ENCODE measurements at regions of chr6 and their contacts with region 1.

Region 1: DNA sequence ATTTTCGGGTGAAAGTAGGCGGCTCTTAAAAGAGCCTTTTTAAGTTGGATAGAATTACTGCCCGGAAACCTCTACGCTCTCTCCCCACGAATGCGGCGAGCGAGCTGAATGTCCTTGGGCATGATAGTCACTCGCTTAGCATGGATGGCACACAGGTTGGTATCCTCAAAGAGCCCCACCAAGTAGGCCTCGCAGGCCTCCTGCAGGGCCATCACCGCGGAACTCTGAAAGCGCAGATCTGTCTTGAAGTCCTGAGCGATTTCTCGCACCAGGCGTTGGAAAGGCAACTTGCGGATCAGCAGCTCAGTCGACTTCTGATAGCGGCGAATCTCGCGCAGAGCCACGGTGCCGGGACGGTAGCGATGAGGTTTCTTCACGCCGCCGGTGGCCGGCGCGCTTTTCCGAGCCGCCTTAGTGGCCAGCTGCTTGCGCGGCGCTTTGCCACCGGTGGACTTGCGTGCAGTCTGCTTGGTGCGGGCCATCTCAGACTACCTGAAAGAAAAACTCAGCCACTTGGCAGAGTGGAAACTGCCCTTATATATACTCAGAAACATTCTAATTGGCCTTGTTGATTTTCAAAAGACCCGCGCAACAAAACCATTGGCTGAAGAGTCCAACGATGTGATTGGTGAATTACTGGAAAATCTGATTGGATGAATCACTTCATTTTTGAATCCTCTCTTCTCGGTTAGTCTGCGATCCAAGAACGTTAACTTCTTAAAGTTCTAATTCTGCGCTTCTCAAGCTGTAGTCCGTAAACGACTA is 93.9 kb upstream of the BTN3A2 start:
- DNase-seq: peak; percentile 86 to 88
- H3K4me3 ChIP-seq: peak overlapping the region; percentile 50
- H3K4me3 Mint-ChIP-seq: no peak overlapping the region
- H3K27ac Mint-ChIP-seq: no peak overlapping the region
- H3K4me1 ChIP-seq: peaks cover 19% of the 10 kb centered on the region
- H3K4me1 Mint-ChIP-seq: peaks cover 19% of the 10 kb centered on the region
- H3K27me3 ChIP-seq: no peaks in the 10 kb centered on the region
- H3K27me3 Mint-ChIP-seq: no peaks in the 10 kb centered on the region
- CTCF ChIP-seq: no peak

Region 2: DNA sequence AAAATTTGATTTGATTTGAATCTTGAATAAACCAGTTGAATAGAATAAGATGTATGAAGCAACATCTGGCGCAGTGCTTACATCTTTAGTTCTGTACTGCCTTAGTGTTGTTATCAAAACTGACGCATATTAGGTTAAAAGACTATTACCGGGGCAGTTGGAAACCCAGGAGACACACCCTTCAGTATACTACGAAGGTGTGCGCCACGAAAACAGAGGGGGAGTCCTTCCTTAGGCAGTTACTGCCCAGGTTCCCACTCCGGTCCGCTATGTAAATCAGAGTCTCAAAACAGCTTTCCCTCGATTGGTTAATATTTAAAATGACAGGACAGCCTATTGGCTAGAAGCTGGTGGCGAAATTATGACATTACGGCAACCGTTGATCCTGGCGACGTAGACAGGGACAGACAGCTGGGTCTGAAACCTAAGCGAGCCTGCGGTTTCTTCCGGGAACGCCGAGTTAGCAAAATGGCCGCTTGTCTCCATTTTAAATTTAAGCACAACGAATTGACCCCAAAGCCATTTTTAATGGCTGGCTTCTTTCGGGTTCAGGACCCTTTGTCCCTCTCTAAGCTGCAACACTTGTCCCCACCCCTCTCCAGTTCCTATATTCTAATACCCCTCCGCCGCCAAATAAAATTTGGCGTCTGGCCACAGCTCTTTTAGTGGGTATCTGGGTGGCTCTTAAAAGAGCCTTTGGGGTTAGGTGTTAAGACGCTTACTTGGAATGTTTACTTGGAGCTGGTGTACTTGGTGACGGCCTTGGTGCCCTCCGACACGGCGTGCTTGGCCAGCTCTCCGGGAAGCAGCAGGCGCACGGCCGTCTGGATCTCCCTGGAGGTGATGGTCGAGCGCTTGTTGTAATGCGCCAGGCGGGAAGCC is 148.1 kb before region 1 on chr6:
- CTCF ChIA-PET with region 1: no interaction called
- POLR2A ChIA-PET with region 1: interaction called, 28 read pairs
- intact Hi-C with region 1: loop called (anchors 10 kb)
- DNase-seq: peak; percentile 96 to 98
- H3K4me3 ChIP-seq: peak overlapping the region; percentile 44
- H3K4me3 Mint-ChIP-seq: peak overlapping the region; percentile 90
- H3K27ac Mint-ChIP-seq: peak overlapping the region; percentile 99
- H3K4me1 ChIP-seq: peaks cover 23% of the 10 kb centered on the region
- H3K4me1 Mint-ChIP-seq: peaks cover 36% of the 10 kb centered on the region
- H3K27me3 ChIP-seq: no peaks in the 10 kb centered on the region
- H3K27me3 Mint-ChIP-seq: no peaks in the 10 kb centered on the region
- CTCF ChIP-seq: no peak

Region 3: GRCh38 chr6:26172496-26172958 is 98.6 kb before region 1 on chr6:
- CTCF ChIA-PET with region 1: no interaction called
- POLR2A ChIA-PET with region 1: interaction called, 13 read pairs
- intact Hi-C with region 1: no loop called
- DNase-seq: no peak
- H3K4me3 ChIP-seq: peak overlapping the region; percentile 53
- H3K4me3 Mint-ChIP-seq: peak overlapping the region; percentile 68
- H3K27ac Mint-ChIP-seq: peak overlapping the region; percentile 37
- H3K4me1 ChIP-seq: peaks cover 6% of the 10 kb centered on the region
- H3K4me1 Mint-ChIP-seq: peaks cover 10% of the 10 kb centered on the region
- H3K27me3 ChIP-seq: no peaks in the 10 kb centered on the region
- H3K27me3 Mint-ChIP-seq: no peaks in the 10 kb centered on the region
- CTCF ChIP-seq: no peak

Region 4: GRCh38 chr6:26234421-26235296 is 36.4 kb before region 1 on chr6:
- CTCF ChIA-PET with region 1: interaction called, 3 read pairs
- POLR2A ChIA-PET with region 1: interaction called, 29 read pairs
- intact Hi-C with region 1: no loop called
- DNase-seq: peak; percentile 79 to 81
- H3K4me3 ChIP-seq: peak overlapping the region; percentile 52
- H3K4me3 Mint-ChIP-seq: peak overlapping the region; percentile 76
- H3K27ac Mint-ChIP-seq: peak overlapping the region; percentile 92
- H3K4me1 ChIP-seq: peaks cover 11% of the 10 kb centered on the region; the same call in 1 of the 2 replicates
- H3K4me1 Mint-ChIP-seq: no peaks in the 10 kb centered on the region
- H3K27me3 ChIP-seq: no peaks in the 10 kb centered on the region
- H3K27me3 Mint-ChIP-seq: no peaks in the 10 kb centered on the region
- CTCF ChIP-seq: no peak

Region 5: DNA sequence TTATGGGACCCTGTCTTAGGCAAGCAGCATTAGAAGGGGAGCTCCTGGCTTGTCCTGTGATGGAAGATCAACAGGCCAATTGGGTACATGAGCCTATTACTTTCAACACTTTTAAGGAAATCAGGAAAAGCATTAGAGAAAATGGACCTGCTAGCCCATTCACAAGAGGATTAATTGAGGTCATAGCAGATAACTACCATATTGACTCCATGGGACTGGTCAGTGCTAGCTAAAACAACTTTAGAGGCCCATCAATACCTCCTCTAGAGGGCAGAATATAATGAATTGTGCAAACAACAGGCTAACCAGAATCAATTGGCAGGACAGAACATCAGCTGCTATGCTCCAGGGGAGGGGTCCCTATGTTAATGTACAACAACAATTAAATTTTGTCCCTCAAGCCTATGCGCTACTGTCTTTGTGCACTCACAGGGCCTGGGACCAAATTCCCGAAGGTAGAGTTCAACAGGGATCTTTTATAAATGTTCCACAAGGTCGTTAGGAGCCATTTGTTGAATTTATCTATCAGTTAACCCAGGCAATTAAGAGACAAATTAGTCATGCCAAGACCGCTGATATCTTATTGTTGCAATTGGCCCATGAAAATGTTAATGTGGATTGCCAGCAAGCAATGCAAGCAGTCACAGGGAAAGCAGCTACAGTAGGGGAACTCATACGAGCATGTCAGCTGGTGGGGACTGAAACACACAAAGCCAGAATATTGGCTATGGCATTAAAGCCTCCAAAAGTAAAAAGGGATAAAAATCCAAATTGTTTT is 12.7 kb before region 1 on chr6:
- CTCF ChIA-PET with region 1: interaction called, 12 read pairs
- POLR2A ChIA-PET with region 1: interaction called, 107 read pairs
- intact Hi-C with region 1: loop called (anchors 1 kb)
- DNase-seq: no peak
- H3K4me3 ChIP-seq: peak overlapping the region; percentile 53
- H3K4me3 Mint-ChIP-seq: peak overlapping the region; percentile 76
- H3K27ac Mint-ChIP-seq: peak overlapping the region; percentile 84
- H3K4me1 ChIP-seq: peaks cover 54% of the 10 kb centered on the region
- H3K4me1 Mint-ChIP-seq: peaks cover 44% of the 10 kb centered on the region
- H3K27me3 ChIP-seq: no peaks in the 10 kb centered on the region
- H3K27me3 Mint-ChIP-seq: no peaks in the 10 kb centered on the region
- CTCF ChIP-seq: peak in 1 of 2 experiments; percentile 14

Region 6: DNA sequence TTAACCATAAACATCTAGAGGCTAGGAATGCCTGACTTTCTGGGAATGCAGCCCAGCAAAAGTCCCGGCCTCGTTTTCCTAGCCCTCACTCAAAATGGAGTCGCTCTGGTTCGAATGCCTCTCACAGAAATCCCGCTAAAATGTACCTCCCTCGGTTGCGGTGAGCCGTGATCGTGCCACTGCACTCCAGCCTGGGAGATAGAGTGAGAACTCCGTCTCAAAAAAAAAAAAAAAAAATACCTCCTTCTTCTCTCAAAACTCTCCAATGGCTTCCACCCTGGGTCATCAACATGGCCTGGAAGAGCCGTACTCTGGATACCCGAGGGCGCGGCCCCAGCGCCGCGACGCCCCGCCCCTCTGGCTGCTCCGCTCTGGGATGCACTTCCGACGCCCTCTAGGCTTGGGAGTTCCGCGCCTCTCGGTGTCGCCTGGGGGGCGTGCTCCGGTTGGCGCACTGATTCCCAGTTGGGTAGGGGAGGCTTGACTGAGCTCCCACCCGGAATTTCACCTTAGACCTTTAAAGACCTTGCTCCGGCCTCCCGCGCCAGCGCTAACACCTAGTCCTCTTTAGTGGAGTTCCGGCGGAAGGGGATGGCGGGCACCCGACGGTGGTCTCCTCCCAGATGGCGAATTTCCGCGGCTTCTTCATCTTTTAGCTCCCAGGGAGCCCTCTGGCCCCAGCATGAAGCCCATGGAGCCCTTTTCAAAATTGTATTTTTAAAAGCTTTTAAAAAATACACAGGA is 279.3 kb after region 1 on chr6:
- CTCF ChIA-PET with region 1: no interaction called
- POLR2A ChIA-PET with region 1: no interaction called
- intact Hi-C with region 1: no loop called
- DNase-seq: peak; percentile 83 to 85
- H3K4me3 ChIP-seq: peak overlapping the region; percentile 39
- H3K4me3 Mint-ChIP-seq: peak overlapping the region; percentile 86
- H3K27ac Mint-ChIP-seq: peak overlapping the region; percentile 81
- H3K4me1 ChIP-seq: peaks cover 5% of the 10 kb centered on the region; the same call in 1 of the 2 replicates
- H3K4me1 Mint-ChIP-seq: no peaks in the 10 kb centered on the region
- H3K27me3 ChIP-seq: no peaks in the 10 kb centered on the region
- H3K27me3 Mint-ChIP-seq: no peaks in the 10 kb centered on the region
- CTCF ChIP-seq: peak in 1 of 2 experiments; percentile 28

Region 7: GRCh38 chr6:27132532-27133280 is 861.6 kb after region 1 on chr6:
- CTCF ChIA-PET with region 1: no interaction called
- POLR2A ChIA-PET with region 1: interaction called, 5 read pairs
- intact Hi-C with region 1: loop called (anchors 5 kb)
- DNase-seq: peak; percentile 95 to 96
- H3K4me3 ChIP-seq: peak overlapping the region; percentile 70
- H3K4me3 Mint-ChIP-seq: no peak overlapping the region
- H3K27ac Mint-ChIP-seq: no peak overlapping the region
- H3K4me1 ChIP-seq: peaks cover 25% of the 10 kb centered on the region
- H3K4me1 Mint-ChIP-seq: peaks cover 6% of the 10 kb centered on the region
- H3K27me3 ChIP-seq: no peaks in the 10 kb centered on the region
- H3K27me3 Mint-ChIP-seq: no peaks in the 10 kb centered on the region
- CTCF ChIP-seq: no peak